ENCODE measurements at regions of chr9 and their contacts with region 1.

Region 1: DNA sequence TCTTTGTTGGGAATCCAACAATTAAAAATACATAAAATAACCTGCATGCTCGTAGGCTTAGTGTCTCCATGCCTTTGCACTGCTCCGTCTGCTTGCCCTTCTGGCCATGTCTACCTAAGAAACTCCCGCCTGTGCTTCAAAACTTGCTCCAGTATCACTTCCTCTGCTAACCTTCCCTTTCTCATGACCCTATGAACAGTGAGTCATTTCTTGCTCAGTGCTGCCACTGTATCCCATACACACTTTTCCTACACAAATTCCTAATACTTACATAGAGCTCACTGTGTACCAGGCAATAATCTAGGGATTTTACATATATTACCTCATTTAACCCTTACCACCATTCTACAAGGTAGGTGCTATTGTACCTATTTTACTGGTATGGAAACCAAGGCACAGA is 33.5 kb downstream of the TMEM245 start:
- DNase-seq: no peak
- ATAC-seq: peak; percentile 72
- H3K4me3 ChIP-seq: no peak overlapping the region
- H3K4me3 Mint-ChIP-seq: no peak overlapping the region
- H3K27ac ChIP-seq: no peak overlapping the region
- H3K27ac Mint-ChIP-seq: peak overlapping the region in 2 of 9 donors; percentile 31 to 43
- H3K4me1 ChIP-seq: no peaks in the 10 kb centered on the region
- H3K4me1 Mint-ChIP-seq: peaks cover 6 to 20% (median 9%) of the 10 kb centered on the region in 7 donors
- H3K27me3 ChIP-seq: no peaks in the 10 kb centered on the region
- H3K27me3 Mint-ChIP-seq: no peaks in the 10 kb centered on the region

Region 2: DNA sequence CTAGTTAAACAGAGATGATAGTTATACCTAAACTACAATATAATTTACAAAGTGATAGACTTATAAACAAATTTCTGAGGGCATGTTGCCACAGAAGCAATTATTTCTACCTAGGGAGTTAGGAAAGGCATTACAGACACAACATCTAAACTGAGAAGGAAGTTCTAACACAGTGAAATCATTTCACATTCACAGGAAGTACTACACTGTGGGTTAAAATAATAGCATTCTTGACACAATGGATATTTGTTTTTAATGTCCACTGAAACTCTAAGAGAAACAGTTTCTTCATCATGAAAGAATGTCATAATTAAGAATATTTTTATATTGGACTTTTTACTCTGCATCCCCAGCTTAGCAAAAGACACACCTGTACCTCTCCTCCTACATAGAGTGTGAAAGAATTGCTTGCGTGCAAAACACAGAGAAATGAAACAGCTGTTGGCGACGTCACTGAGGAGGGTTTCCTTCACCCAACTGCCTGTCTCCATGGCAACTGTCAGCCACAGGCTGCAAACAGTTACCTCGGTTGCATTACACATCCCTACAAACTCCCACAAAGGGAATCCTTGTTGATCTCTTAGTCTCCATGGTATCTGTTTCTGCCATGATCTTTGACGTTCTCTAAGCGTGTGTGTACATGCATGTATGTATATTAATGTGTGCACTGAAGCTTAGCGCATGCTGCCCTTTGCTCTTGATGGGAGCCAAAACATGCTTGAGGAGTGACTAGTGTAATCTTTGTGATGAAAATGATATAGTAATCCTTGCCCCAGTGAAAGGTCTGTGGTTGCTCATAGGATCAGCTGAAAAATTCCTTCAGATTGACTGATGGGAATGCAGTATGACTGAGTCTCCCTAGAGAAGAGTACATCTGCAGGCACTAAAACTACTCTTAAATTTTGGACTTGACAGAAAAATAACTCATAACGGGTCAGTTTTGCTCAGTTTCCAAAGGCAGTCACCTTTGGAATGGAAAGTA is 398.9 kb before region 1 on chr9:
- CTCF ChIA-PET with region 1: no interaction called
- POLR2A ChIA-PET with region 1: no interaction called
- intact Hi-C with region 1: no loop called
- DNase-seq: no peak
- ATAC-seq: no peak
- H3K4me3 ChIP-seq: no peak overlapping the region
- H3K4me3 Mint-ChIP-seq: no peak overlapping the region
- H3K27ac ChIP-seq: no peak overlapping the region
- H3K27ac Mint-ChIP-seq: no peak overlapping the region
- H3K4me1 ChIP-seq: no peaks in the 10 kb centered on the region
- H3K4me1 Mint-ChIP-seq: no peaks in the 10 kb centered on the region
- H3K27me3 ChIP-seq: no peaks in the 10 kb centered on the region
- H3K27me3 Mint-ChIP-seq: peaks cover 0 to 6% (median 5%) of the 10 kb centered on the region in 5 donors

Region 3: DNA sequence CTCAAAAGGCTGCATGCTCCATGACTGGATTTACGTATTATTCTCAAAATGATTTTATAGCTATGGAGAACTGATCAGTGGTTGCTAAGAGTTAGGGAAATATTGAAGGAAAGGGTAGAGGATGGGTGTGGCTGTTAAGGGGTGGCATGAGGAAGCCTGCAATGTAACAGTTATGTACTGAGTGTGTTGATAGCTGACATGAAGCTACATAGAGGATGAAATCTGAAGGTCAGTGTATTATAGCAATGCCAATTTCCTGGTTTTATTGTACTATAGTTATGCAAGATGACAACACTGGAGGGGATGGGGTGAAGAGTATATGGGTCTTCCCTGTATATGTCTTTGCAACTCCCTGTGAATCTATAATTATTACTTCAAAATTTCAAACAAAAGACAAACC is 17.5 kb before region 1 on chr9:
- CTCF ChIA-PET with region 1: interaction called, 4 read pairs
- POLR2A ChIA-PET with region 1: interaction called, 3 read pairs
- intact Hi-C with region 1: loop called in 1 of 2 experiments (anchors 2 kb)
- DNase-seq: no peak
- ATAC-seq: no peak
- H3K4me3 ChIP-seq: no peak overlapping the region
- H3K4me3 Mint-ChIP-seq: no peak overlapping the region
- H3K27ac ChIP-seq: no peak overlapping the region
- H3K27ac Mint-ChIP-seq: no peak overlapping the region
- H3K4me1 ChIP-seq: no peaks in the 10 kb centered on the region
- H3K4me1 Mint-ChIP-seq: peaks cover 0 to 4% (median 0%) of the 10 kb centered on the region in 7 donors
- H3K27me3 ChIP-seq: no peaks in the 10 kb centered on the region
- H3K27me3 Mint-ChIP-seq: no peaks in the 10 kb centered on the region